ENCODE measurements at regions of chr20 and their contacts with region 1.

Region 1: GRCh38 chr20:53915446-53916172 is 154.8 kb downstream of the BCAS1 start:
- DNase-seq: peak; percentile 98
- H3K4me3 ChIP-seq: peak overlapping the region; percentile 68
- H3K4me3 Mint-ChIP-seq: peak overlapping the region; percentile 92
- H3K27ac Mint-ChIP-seq: peak overlapping the region; percentile 82
- H3K4me1 ChIP-seq: peaks cover 10% of the 10 kb centered on the region
- H3K4me1 Mint-ChIP-seq: peaks cover 34% of the 10 kb centered on the region
- H3K27me3 ChIP-seq: no peaks in the 10 kb centered on the region
- H3K27me3 Mint-ChIP-seq: no peaks in the 10 kb centered on the region
- CTCF ChIP-seq: peak; percentile 98 to 99

Region 2: DNA sequence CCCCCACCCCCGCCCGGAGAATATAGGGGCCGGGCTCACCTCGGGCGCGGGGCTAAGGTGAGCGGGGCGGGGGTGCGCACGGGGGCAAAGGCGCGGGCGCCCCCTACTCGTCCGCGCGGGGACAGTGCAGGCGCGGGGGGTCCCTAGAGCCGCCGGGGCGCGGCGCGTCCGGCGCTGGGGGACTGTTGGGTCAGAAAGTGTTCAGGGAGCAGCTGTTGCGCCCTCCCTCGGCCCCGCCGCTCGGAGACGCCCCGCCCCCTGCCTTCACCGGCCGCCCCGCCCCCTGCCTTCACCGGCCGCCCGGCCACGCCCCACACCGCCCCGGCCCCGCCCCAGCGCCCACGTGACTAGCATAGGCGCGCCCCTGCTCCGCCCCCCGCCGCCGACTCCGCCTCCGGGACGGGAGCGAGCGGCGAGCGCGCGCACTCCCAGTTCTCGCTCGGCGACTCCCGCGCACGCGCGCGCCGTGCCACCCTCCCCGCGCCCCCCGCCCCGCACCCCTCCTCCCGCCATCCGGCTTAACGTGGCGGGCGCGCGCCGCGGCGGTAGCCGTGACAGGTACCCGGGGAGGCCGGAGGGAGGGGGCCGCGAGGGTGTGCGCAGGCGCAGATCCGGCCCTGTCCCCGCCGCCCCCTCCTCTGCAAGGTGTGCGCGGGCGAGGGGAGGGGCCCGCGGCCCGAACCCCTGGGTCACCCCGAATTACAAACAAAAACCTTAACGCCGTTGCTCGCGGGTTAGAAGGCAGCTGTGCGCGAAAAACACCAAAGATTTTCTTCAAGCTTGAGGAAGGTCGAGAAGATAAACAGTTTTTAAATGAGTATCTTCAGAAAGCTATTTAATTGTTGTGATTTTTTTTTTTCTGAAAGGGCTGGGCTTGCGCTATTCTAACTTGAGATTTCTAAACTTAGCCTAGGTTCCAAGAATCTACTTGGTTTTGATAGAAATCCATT is 321.3 kb before region 1 on chr20:
- CTCF ChIA-PET with region 1: interaction called, 5 read pairs
- POLR2A ChIA-PET with region 1: interaction called, 3 read pairs
- intact Hi-C with region 1: loop called (anchors 5 kb)
- DNase-seq: peak; percentile 99 to 100
- H3K4me3 ChIP-seq: peak overlapping the region; percentile 98
- H3K4me3 Mint-ChIP-seq: peak overlapping the region; percentile 87
- H3K27ac Mint-ChIP-seq: peak overlapping the region; percentile 80
- H3K4me1 ChIP-seq: peaks cover 38% of the 10 kb centered on the region
- H3K4me1 Mint-ChIP-seq: peaks cover 44% of the 10 kb centered on the region
- H3K27me3 ChIP-seq: no peaks in the 10 kb centered on the region
- H3K27me3 Mint-ChIP-seq: no peaks in the 10 kb centered on the region
- CTCF ChIP-seq: peak; percentile 64 to 79

Region 3: DNA sequence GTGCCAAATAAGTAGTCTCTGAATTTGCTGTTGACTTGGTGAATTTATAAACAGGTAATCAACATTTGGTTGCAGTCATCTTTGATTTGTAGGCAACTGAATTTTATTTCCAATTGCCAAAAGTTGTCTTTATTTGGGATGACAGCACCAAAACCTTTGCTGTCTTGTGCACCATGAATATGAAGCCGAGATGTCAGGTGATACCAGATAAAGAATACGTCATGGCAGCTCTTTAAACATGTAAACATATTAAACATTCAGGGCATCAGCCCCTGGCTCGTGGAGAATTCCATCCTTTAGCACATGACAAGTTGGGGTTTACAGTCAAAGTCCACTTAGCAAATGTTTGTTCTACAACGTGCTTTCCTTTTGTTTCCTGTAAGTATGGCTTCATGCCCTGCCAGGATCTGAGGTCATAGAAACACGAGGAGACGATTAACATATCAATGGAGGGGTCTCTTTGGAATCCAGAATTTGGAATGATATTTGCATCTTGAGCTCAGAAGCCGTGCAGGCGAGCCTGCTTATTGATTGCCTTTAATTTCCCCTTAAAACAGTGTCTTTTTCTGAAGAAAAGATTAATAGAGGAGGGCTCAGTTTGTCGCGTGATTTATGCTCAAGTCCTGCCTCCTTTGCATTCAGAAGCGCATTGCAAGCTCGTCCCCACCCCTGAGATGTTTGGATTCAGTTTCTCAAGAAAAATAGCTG is 151.7 kb before region 1 on chr20:
- CTCF ChIA-PET with region 1: interaction called, 9 read pairs
- POLR2A ChIA-PET with region 1: interaction called, 4 read pairs
- intact Hi-C with region 1: loop called (anchors 1 kb)
- DNase-seq: peak; percentile 95 to 97
- H3K4me3 ChIP-seq: peak overlapping the region; percentile 26
- H3K4me3 Mint-ChIP-seq: peak overlapping the region; percentile 82
- H3K27ac Mint-ChIP-seq: peak overlapping the region; percentile 99
- H3K4me1 ChIP-seq: peaks cover 61% of the 10 kb centered on the region
- H3K4me1 Mint-ChIP-seq: peaks cover 55% of the 10 kb centered on the region
- H3K27me3 ChIP-seq: no peaks in the 10 kb centered on the region
- H3K27me3 Mint-ChIP-seq: no peaks in the 10 kb centered on the region
- CTCF ChIP-seq: peak; percentile 33 to 35

Region 4: DNA sequence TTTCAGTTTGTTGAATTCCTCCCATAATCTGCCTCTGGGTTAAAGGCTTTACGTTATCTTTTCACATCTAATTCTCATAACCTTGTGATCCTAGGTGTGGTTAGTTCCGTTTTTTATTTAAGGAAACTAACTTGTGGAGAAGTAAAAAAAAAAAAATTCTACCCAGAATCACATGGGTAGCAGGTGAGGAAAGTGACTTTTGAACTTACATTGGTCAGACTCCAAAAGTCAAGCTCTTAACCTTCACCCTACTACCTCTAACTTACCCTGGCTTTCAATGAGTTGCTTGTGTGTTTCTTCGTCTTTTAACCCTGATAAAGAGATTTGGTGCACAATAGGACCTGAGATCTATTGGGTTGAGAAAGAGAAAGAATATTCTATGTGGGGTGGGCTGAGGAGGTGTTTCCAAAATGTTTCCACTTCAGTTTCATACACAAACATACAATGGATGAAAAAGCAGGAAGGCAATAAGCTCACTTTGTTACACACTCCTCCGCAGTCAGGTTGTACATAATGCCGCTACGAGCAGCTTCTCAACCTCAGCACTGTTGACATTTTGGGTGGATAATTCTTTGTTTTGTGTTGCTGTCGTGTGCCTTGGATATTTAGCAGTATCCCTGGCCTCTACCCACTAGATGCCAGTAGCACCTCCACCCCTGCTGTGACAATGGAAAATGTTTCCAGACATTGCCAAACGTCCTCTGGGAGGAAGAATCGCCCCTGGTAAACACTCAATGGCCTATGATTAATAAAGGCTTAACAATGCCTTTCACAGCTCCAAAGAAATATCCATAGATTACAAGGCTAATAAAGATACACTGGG is 129.0 kb before region 1 on chr20:
- CTCF ChIA-PET with region 1: interaction called, 28 read pairs
- POLR2A ChIA-PET with region 1: no interaction called
- intact Hi-C with region 1: loop called (anchors 1 kb)
- DNase-seq: peak; percentile 47 to 67
- H3K4me3 ChIP-seq: no peak overlapping the region; the same call in 1 of the 2 replicates
- H3K4me3 Mint-ChIP-seq: peak overlapping the region; percentile 39
- H3K27ac Mint-ChIP-seq: peak overlapping the region; percentile 59
- H3K4me1 ChIP-seq: peaks cover 71% of the 10 kb centered on the region
- H3K4me1 Mint-ChIP-seq: peaks cover 70% of the 10 kb centered on the region
- H3K27me3 ChIP-seq: no peaks in the 10 kb centered on the region
- H3K27me3 Mint-ChIP-seq: no peaks in the 10 kb centered on the region
- CTCF ChIP-seq: peak in 1 of 2 experiments; percentile 13

Region 5: GRCh38 chr20:53828682-53829254 is 86.8 kb before region 1 on chr20:
- CTCF ChIA-PET with region 1: no interaction called
- POLR2A ChIA-PET with region 1: no interaction called
- intact Hi-C with region 1: loop called (anchors 1 kb)
- DNase-seq: peak in 1 of 2 experiments; percentile 47
- H3K4me3 ChIP-seq: 0 out of 2 replicates have a peak overlapping the region, but pooled peaks have one; percentile 8
- H3K4me3 Mint-ChIP-seq: peak overlapping the region; percentile 65
- H3K27ac Mint-ChIP-seq: peak overlapping the region; percentile 81
- H3K4me1 ChIP-seq: peaks cover 35% of the 10 kb centered on the region
- H3K4me1 Mint-ChIP-seq: peaks cover 45% of the 10 kb centered on the region
- H3K27me3 ChIP-seq: no peaks in the 10 kb centered on the region
- H3K27me3 Mint-ChIP-seq: no peaks in the 10 kb centered on the region
- CTCF ChIP-seq: peak in 1 of 2 experiments; percentile 41

Region 6: GRCh38 chr20:53878578-53879363 is 36.8 kb before region 1 on chr20:
- CTCF ChIA-PET with region 1: no interaction called
- POLR2A ChIA-PET with region 1: no interaction called
- intact Hi-C with region 1: loop called (anchors 2 kb)
- DNase-seq: no peak
- H3K4me3 ChIP-seq: no peak overlapping the region
- H3K4me3 Mint-ChIP-seq: no peak overlapping the region
- H3K27ac Mint-ChIP-seq: no peak overlapping the region
- H3K4me1 ChIP-seq: peaks cover 13% of the 10 kb centered on the region
- H3K4me1 Mint-ChIP-seq: peaks cover 13% of the 10 kb centered on the region
- H3K27me3 ChIP-seq: no peaks in the 10 kb centered on the region
- H3K27me3 Mint-ChIP-seq: no peaks in the 10 kb centered on the region
- CTCF ChIP-seq: no peak

Region 7: DNA sequence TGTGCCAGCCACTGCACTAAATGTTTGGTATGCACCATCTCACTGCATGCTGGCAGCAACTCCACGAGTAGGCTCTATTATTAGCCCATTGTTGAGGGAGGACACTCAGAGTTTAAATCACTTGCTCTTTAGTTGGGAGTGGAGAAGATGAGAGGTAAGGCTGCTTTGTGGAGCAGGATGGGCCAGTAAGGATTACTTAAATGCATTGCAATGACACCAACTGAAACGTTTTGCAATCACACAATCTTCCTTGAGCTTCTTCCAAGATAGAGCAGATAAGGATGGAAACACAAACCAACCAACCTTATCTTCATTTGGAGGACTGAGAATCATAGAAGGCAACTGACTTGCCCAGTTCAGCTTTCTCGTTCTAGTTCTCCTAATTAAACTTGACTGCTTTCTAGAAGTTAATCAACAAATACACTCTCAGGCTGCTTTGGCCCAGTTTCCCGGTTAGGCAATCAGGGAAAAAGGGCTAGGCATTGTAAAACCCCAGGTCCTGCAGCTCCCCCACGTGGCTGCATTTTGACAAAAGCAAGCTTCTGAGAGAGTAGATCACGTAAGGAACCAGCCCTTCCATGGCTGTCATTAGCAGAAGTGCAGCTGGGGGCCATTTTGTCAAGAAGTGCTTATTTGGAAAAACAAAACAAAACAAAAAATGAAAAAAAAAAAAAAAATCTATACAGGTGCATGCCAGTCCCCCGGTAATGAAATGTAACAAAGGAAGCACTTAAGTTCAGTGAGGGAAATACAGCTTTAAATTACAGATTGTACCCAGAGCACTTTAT is 24.2 kb after region 1 on chr20:
- CTCF ChIA-PET with region 1: interaction called, 38 read pairs
- POLR2A ChIA-PET with region 1: no interaction called
- intact Hi-C with region 1: loop called (anchors 1 kb)
- DNase-seq: peak; percentile 95 to 96
- H3K4me3 ChIP-seq: no peak overlapping the region
- H3K4me3 Mint-ChIP-seq: no peak overlapping the region
- H3K27ac Mint-ChIP-seq: no peak overlapping the region
- H3K4me1 ChIP-seq: peaks cover 30% of the 10 kb centered on the region
- H3K4me1 Mint-ChIP-seq: peaks cover 35% of the 10 kb centered on the region
- H3K27me3 ChIP-seq: no peaks in the 10 kb centered on the region; the same call in 1 of the 2 replicates
- H3K27me3 Mint-ChIP-seq: no peaks in the 10 kb centered on the region
- CTCF ChIP-seq: peak; percentile 93 to 98

Measured in Caco-2 (cell line).